Ascending aorta (tissue), 2 donors: ENCODE measurements at regions of chr17 and their contacts with region 1.

Region 1: GRCh38 chr17:47279062-47279736 is 25.6 kb downstream of the ITGB3 start:
- DNase-seq: peak; percentile 57 to 96
- H3K4me3 ChIP-seq: peak overlapping the region in 1 of 2 donors; percentile 14
- H3K27ac ChIP-seq: peak overlapping the region; percentile 96 to 97
- H3K4me1 ChIP-seq: peaks cover 43 to 68% of the 10 kb centered on the region in 2 donors
- H3K27me3 ChIP-seq: no peaks in the 10 kb centered on the region
- CTCF ChIP-seq: no peak

Region 2: DNA sequence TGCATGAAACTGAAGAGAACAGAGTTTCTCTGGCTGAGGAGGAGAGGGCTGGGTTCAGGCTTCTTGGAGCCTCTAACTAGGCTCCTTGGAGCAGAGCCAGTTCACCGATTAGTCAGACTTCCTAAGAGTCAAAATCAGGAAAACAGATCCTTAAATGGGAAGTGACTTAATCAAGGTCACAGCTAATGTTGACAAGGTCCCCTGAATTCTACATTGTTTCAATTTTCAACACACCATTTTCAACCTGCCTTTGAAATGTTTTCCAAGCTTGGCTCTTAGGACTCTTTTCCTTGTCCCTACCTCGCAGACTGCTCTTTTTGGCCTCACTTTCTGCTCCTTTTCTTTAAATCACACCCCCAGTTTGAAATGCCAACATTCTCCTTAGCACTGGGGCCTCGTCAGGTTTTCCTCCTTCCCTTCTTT is 53.8 kb before region 1 on chr17:
- intact Hi-C with region 1: no loop called
- DNase-seq: peak; percentile 56 to 96
- H3K4me3 ChIP-seq: no peak overlapping the region
- H3K27ac ChIP-seq: peak overlapping the region; percentile 92 to 93
- H3K4me1 ChIP-seq: peaks cover 15 to 49% of the 10 kb centered on the region in 2 donors
- H3K27me3 ChIP-seq: no peaks in the 10 kb centered on the region
- CTCF ChIP-seq: no peak

Region 3: GRCh38 chr17:47239619-47240374 is 39.4 kb before region 1 on chr17:
- intact Hi-C with region 1: loop called (anchors 1 kb)
- DNase-seq: peak; percentile 82 to 98
- H3K4me3 ChIP-seq: no peak overlapping the region
- H3K27ac ChIP-seq: peak overlapping the region; percentile 95
- H3K4me1 ChIP-seq: peaks cover 0 to 19% of the 10 kb centered on the region in 2 donors
- H3K27me3 ChIP-seq: no peaks in the 10 kb centered on the region
- CTCF ChIP-seq: no peak

Region 4: DNA sequence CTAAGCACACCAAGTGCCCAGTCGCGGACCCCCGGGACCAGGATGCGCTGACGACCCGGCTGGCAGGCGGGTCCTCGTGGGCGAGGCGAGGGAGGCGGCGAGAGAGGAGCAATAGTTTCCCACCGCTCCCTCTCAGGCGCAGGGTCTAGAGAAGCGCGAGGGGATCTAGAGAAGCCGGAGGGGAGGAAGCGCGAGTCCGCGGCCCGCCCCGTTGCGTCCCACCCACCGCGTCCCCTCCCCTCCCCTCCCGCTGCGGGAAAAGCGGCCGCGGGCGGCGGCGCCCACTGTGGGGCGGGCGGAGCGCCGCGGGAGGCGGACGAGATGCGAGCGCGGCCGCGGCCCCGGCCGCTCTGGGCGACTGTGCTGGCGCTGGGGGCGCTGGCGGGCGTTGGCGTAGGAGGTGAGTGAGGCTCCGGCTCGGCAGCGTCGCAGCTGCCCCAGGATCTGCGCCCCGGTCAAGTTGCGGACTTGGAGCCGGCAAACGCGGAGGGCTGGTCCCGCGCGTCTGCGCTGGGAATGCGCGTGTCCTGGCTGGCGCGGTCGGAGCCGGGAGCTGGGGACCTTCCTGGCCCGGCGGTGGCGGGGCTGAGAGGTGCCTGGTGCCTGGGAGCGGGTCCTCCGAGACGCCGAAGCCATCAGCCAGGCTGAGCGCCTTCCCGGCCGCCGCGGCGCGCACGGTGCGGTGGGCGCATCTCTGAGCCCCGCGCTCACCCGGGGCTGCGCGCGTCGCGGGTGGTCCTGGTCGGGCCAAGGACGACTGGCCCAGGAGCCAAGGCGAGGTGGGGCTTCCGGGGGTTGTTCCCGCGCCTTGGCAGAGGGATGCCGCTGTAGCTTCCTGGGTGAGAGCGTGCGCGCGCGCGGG is 25.4 kb before region 1 on chr17 and contains the start of gene ITGB3:
- intact Hi-C with region 1: loop called (anchors 1 kb)
- DNase-seq: peak in 1 of 2 donors; percentile 90
- H3K4me3 ChIP-seq: peak within 1 kb of the TSS; percentile 79 to 90
- H3K27ac ChIP-seq: peak within 1 kb of the TSS; percentile 92 to 95
- H3K4me1 ChIP-seq: peaks cover 10 to 38% of the 10 kb centered on the region in 2 donors
- H3K27me3 ChIP-seq: no peaks in the 10 kb centered on the region
- CTCF ChIP-seq: peak; percentile 41 to 49 (median 45)
- total RNA-seq, gene ITGB3: 71.3 TPM

Region 5: GRCh38 chr17:47295062-47295845 is 16.1 kb after region 1 on chr17:
- intact Hi-C with region 1: loop called (anchors 2 kb)
- DNase-seq: peak in 1 of 2 donors; percentile 71
- H3K4me3 ChIP-seq: no peak overlapping the region
- H3K27ac ChIP-seq: peak overlapping the region; percentile 87 to 89
- H3K4me1 ChIP-seq: peaks cover 13 to 37% of the 10 kb centered on the region in 2 donors
- H3K27me3 ChIP-seq: no peaks in the 10 kb centered on the region
- CTCF ChIP-seq: no peak

Region 6: GRCh38 chr17:47305302-47305923 is 26.2 kb after region 1 on chr17:
- intact Hi-C with region 1: loop called (anchors 1 kb)
- DNase-seq: peak in 1 of 2 donors; percentile 84
- H3K4me3 ChIP-seq: no peak overlapping the region
- H3K27ac ChIP-seq: peak overlapping the region; percentile 74 to 82
- H3K4me1 ChIP-seq: peaks cover 4 to 16% of the 10 kb centered on the region in 2 donors
- H3K27me3 ChIP-seq: no peaks in the 10 kb centered on the region
- CTCF ChIP-seq: no peak

Region 7: GRCh38 chr17:47315451-47316266 is 36.5 kb after region 1 on chr17:
- intact Hi-C with region 1: loop called (anchors 2 kb)
- DNase-seq: no peak
- H3K4me3 ChIP-seq: no peak overlapping the region
- H3K27ac ChIP-seq: peak overlapping the region; percentile 80 to 81
- H3K4me1 ChIP-seq: peaks cover 19 to 40% of the 10 kb centered on the region in 2 donors
- H3K27me3 ChIP-seq: no peaks in the 10 kb centered on the region
- CTCF ChIP-seq: peak; percentile 77 to 83 (median 79)

Region 8: DNA sequence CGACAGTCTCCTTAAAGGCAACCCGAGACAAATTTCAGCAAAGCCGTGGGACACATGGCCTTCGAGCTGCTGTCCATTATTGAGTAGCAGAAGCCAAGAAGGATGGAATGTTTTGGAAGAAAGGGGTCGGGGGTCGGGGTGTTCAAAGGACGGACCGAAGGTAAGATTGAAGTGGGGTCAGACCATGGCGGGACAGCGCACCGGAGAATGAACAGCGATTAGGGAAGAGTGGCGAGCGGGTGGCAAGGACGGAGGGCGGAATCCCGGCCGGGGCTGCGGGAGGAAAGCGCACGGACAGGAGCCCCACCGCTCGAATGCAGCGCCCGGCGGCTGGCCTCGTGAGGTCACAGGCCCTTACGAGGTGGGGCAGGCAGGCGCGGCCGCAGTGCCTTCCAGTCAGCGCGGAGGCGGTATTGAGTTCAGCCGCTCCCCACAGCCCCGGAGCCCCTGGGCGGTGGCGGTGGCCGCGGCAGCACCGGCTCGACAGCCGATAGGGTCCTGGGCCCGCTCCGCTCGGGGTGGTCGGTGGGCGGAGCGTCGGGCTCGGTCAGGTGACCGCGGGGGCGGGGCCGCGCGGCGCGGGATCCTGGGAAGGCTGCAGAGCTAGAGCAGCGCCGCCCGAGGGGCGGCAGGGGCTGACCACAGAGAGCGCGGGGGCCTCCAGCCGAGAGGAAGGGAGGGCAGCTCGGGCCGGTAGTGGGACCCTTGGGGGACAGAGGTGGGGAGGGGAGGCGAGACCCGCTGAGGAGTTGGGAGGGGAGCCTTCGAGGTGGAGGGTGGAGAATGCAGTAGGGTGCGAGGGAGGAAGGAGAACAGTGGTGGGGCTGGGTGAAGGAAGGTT is 44.4 kb after region 1 on chr17 and contains the start of gene EFCAB13:
- intact Hi-C with region 1: loop called (anchors 2 kb)
- DNase-seq: peak; percentile 62 to 95
- H3K4me3 ChIP-seq: peak within 1 kb of the TSS; percentile 65 to 77
- H3K27ac ChIP-seq: peak within 1 kb of the TSS; percentile 89 to 93
- H3K4me1 ChIP-seq: peaks cover 0 to 5% of the 10 kb centered on the region in 2 donors
- H3K27me3 ChIP-seq: no peaks in the 10 kb centered on the region
- CTCF ChIP-seq: peak; percentile 21 to 51 (median 32)
- total RNA-seq, gene EFCAB13: 1.2 TPM

Region 9: DNA sequence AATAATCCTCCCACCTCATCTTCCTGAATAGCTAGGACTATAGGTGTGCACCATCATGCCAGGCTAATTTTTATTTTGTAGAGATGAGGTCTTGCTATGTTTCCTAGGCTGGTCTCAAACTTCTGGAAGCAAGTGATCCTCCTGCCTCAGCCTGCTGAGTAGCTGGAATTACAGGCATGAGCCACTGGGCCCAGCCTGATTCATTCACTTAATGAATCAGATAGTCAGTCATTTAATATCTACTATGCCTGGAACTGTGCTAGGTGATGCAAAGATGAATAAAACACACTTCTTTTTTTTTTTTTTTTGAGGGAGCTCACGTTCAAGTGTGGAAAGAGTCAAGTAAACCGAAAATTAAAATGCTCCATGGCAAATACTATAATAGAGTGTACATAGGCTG is 84.0 kb after region 1 on chr17:
- intact Hi-C with region 1: no loop called
- DNase-seq: no peak
- H3K4me3 ChIP-seq: no peak overlapping the region
- H3K27ac ChIP-seq: no peak overlapping the region
- H3K4me1 ChIP-seq: no peaks in the 10 kb centered on the region
- H3K27me3 ChIP-seq: no peaks in the 10 kb centered on the region
- CTCF ChIP-seq: no peak

Region 10: DNA sequence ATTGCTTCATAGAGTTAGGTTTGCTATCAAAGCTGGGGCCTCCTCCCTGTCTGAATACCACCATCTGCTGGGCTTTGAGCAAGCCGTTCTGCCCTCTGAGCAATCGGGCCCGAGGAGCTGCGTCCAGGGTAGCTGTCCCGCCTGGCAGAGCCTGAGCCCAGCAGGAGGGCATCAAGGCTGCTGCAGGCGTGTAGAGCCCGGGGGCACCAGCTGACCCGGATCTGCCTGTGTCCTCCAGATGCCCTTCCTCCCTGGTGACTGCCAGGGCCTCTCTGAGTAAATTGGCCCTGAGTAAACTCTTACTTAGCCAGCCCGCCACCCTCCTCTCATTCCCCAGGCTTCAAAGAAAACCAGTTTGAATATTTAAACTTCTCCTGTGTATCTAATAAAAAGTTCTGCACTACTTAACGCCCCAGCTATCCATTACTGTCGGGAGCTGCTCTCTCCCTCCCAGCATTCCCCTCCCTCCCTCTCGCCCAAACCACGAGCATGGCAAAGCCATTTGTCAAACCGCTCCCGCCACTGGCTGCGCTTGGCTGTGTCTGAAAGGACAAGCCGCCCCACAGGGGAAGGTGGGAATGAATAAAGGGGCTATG is 708.1 kb after region 1 on chr17:
- intact Hi-C with region 1: no loop called
- DNase-seq: no peak
- H3K4me3 ChIP-seq: no peak overlapping the region
- H3K27ac ChIP-seq: no peak overlapping the region
- H3K4me1 ChIP-seq: peaks cover 0 to 3% of the 10 kb centered on the region in 2 donors
- H3K27me3 ChIP-seq: no peaks in the 10 kb centered on the region
- CTCF ChIP-seq: no peak